Prostate gland (tissue), 2 donors: ENCODE measurements at regions of chr15 and their contacts with region 1.

Region 1: DNA sequence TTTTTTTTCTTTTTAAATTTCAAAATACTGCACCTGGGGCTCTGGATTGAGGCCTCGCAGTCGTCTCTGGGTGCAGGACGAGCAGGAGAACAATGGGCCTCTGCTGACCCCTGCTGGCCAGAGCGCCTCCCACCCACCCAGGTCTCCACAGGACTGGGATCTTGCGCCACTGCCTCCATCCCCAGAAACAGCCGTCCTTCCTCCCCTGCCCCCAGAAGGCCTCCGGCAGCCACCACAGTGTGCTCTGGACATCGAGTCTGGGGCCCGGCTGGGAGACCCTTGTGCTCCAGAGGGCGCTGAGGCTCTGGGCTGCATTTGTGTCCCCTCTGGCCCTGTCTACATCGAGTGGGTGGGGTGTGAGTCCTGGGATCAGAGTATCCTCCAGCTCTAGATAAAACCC is 6.6 kb upstream of the ACSBG1 start:
- DNase-seq: peak; percentile 82
- H3K4me3 ChIP-seq: no peak overlapping the region
- H3K27ac ChIP-seq: no peak overlapping the region
- H3K4me1 ChIP-seq: no peaks in the 10 kb centered on the region
- H3K27me3 ChIP-seq: no peaks in the 10 kb centered on the region
- CTCF ChIP-seq: peak; percentile 76 to 91 (median 88)
- POLR2A ChIP-seq: no peak

Region 2: DNA sequence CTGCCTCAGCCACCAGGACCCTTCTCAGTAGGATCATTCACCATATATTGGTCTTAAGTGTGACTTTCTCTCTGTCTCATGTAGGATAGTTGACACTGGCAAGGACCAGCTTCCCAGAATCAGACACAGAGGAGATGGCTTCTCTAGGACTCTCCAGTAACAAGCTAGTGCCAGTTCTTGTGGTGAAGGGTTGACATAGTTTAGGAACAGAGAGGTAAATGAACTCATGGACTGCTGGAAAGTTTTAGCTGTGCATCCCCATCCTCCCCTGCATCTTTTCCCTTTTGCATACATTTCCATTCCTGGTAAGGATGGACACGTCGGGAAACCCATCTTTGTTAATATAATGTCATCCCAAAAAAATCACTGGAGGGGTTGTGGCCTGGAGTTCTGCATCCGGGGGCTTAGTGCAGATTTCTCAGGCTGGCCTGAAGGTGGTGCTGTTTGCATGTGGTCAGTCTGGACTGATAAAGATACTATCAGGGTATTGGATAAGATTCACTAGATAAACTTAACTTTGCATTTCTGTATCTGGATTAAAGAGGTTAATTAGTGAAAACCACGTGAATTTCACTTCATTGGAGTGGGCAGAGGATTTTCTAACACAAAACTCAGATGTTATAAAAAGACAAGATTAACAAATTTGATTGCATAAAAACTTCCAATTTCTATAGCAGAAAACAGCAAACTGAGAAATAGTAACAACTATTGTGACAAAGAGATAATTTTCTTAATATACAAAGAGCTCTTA is 274.3 kb before region 1 on chr15:
- intact Hi-C with region 1: loop called (anchors 10 kb)
- DNase-seq: no peak
- H3K4me3 ChIP-seq: no peak overlapping the region
- H3K27ac ChIP-seq: no peak overlapping the region
- H3K4me1 ChIP-seq: no peaks in the 10 kb centered on the region
- H3K27me3 ChIP-seq: no peaks in the 10 kb centered on the region
- CTCF ChIP-seq: peak; percentile 60 to 87 (median 72)
- POLR2A ChIP-seq: no peak

Region 3: DNA sequence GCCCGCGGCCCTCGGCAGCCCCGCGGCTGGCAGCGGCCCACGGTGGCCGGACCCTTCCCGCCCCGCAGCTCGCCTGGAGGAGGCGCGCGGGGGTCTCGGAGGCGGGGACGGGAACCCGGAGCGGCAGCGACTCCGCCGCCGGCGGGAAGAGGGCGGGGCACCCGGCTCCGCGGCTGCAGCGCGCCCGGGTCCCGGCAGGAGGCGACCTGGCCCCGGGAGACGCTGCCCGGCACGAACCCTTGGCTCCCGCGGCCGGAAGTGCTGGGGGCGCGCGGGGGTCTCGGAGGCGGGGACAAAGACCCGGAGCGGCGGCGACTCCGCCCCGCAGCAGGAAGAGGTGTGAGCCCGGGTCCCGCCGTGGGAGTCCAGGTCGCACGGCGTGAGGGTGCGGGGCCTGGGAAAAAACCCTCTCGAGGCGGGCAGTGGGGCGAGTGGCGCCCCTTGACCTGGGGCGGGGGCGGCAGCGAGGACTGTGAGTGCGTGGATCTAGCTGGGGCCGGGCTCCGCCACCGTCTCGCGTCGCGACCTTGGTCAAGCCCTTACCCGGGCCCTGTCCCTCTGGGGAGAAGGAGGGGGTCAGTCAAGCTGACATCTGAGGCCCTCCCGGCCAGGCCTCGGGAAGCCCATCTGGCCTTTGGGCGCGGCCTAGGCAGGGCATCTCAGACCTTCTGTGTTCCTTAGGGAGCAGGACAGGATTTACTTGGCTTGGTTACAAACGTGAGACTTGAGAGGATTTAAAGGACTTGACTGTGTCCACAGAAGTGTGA is 109.5 kb before region 1 on chr15 and contains the start of gene CIB2:
- intact Hi-C with region 1: loop called (anchors 5 kb)
- DNase-seq: peak; percentile 58
- H3K4me3 ChIP-seq: peak within 1 kb of the TSS; percentile 64 to 67
- H3K27ac ChIP-seq: peak within 1 kb of the TSS; percentile 76 to 77
- H3K4me1 ChIP-seq: peaks cover 10% of the 10 kb centered on the region
- H3K27me3 ChIP-seq: no peaks in the 10 kb centered on the region
- CTCF ChIP-seq: peak; percentile 70 to 94 (median 84)
- POLR2A ChIP-seq: peak; percentile 15
- total RNA-seq, gene CIB2: 16.7 to 23.0 TPM

Region 4: DNA sequence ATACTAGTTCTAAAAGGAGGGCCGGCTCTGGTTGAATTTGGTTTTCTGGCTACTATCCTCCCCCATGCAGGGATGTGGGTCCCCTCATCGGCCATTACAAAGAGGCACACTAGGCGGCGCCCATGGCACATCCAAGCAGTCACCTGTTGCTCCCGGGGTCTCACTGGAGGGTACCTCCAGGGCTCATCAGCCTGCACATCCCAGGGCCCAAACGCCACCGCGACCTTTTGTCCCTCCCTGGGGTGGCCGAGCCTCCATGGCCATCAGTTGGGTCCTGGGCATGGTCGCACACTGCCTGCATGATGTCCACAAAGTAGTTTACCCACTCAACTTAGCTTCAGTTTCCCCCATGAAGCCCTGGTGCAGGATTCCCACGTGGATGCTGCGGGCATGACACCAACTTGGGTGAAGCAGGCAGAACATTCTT is 63.5 kb before region 1 on chr15:
- intact Hi-C with region 1: loop called (anchors 5 kb)
- DNase-seq: peak; percentile 28
- H3K4me3 ChIP-seq: no peak overlapping the region
- H3K27ac ChIP-seq: no peak overlapping the region
- H3K4me1 ChIP-seq: no peaks in the 10 kb centered on the region
- H3K27me3 ChIP-seq: no peaks in the 10 kb centered on the region
- CTCF ChIP-seq: peak in 3 of 4 experiments; percentile 43 to 70 (median 56)
- POLR2A ChIP-seq: no peak